AG04450 (cell line): ENCODE measurements at regions of chr4 and their contacts with region 1.

Region 1: DNA sequence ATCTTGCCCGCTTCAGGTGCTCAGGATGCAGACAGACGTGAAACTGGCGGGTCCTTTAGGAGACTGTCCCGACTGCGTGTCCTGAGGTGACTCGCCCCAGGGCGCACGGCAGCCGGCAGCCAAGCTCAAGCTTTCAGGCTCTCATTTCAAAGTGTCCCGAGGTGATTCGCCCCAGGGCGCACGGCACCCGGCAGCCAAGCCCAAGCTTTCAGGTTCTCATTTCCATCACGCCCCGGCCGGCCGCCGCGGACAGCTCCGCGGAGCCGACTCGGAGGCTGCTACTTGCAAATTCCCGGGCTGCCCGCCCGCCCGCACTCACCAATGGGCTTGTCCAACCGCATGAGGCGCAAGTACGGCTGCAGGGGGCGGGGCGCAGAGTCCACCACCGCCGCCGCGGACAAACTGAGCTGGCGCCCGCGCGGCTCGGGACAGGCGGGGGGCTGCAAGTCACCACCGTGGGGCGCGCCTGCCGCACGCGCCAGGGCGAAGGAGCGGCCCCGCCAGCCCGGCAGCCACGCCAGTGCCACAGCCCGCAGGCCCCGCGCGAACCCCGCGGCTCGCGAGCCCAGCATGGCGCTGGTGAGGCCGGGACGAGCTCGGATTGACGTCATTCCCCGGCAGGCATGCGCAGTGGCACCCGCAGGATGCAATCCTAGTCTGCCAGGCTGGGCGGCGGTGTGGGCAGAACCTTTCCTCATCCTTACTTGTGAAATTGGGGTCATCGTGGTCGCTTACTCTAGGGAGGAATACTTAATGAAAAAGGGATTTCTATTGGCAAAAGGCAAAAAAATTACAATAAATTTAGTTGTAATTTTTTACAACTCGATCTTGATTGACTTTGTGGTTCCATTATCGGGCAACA is at the start of gene COQ2:
- DNase-seq: peak; percentile 85
- H3K4me3 ChIP-seq: peak within 1 kb of the TSS; percentile 74
- H3K27ac ChIP-seq: peak within 1 kb of the TSS; percentile 69
- H3K27me3 ChIP-seq: no peaks in the 10 kb centered on the region
- CTCF ChIP-seq: no peak; the same call in 1 of the 2 replicates
- polyA plus RNA-seq, gene COQ2: 13.9 and 18.9 TPM in 2 replicates

Region 2: GRCh38 chr4:82462415-82462831 is 822.0 kb before region 1 on chr4:
- CTCF ChIA-PET with region 1: interaction called, 10 read pairs
- POLR2A ChIA-PET with region 1: no interaction called
- DNase-seq: peak; percentile 79
- H3K4me3 ChIP-seq: no peak overlapping the region
- H3K27ac ChIP-seq: no peak overlapping the region
- H3K27me3 ChIP-seq: no peaks in the 10 kb centered on the region
- CTCF ChIP-seq: peak; percentile 77

Region 3: DNA sequence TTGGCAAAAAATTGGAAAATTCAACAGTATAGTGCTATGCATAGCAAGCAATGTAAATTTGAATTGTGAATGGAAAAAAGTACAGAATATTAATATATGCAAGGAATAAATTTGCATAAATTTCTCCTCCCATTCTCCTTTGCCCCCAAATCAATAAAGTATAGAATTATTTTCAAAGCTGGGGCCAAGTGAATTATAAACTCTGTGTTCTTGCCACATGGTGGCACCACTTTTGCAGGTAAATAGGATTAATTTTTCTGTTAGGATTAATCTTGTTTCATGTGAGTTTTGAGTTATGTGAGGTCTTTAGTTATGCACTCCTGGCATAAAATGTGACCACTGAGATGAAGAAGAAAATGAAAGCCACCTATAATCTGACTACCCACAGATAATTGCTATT is 229.5 kb before region 1 on chr4:
- CTCF ChIA-PET with region 1: interaction called, 18 read pairs
- POLR2A ChIA-PET with region 1: no interaction called
- DNase-seq: no peak
- H3K4me3 ChIP-seq: no peak overlapping the region
- H3K27ac ChIP-seq: no peak overlapping the region
- H3K27me3 ChIP-seq: no peaks in the 10 kb centered on the region
- CTCF ChIP-seq: peak; percentile 41

Region 4: DNA sequence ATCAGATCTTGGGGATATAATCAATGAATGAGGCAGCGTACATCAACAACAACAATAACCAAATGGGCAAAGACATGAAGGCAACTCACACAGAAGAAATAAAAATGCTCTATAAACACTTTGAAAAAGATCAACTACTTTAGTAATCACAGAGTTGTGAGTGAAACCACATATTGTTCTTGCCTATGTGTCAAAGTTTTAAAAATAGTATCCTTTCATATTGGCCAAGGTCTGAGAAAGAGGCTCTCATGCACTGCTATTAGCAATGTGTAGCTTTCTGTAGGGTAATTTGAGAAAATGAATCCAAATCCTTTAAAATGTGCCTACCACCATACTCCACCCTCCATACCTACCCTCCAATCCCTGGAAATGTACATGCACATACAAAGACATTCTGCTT is 24.8 kb before region 1 on chr4:
- CTCF ChIA-PET with region 1: interaction called, 13 read pairs
- POLR2A ChIA-PET with region 1: interaction called, 3 read pairs
- DNase-seq: no peak
- H3K4me3 ChIP-seq: no peak overlapping the region
- H3K27ac ChIP-seq: no peak overlapping the region
- H3K27me3 ChIP-seq: no peaks in the 10 kb centered on the region
- CTCF ChIP-seq: no peak

Region 5: DNA sequence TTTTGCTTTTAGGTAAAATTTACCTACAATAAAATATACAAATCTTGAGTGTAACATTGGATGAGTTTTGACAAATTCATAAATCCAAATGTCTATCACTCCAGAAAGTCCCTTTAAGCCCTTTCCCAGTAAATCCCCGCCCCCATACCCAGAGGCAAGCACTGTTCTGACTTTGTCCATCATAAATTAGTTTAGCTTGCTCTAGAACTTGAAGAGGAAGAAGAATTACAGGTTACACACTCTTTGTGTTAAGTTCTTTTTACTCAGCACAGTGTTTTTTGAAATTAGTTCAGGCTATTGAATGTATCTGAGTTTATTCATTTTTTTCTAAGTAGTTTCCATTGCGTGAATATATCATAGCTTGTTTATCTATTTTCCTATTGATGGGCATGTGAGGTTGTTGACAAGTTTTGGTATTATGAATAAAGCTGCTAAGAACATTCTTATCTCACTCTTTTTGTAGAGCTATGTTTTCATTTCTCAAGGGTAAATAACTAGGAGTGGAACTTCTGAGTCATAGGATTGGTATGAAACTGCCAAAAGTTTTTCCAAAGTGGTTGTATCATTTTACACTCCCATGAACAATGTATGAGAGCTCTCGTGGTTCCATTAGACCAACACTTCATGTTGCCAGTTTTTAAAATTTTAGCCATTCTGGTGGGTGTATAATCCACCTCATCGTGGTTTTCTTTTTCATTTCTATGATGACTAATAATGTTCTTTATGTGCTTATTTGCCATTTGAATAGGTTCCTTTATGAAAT is 72.7 kb after region 1 on chr4:
- CTCF ChIA-PET with region 1: interaction called, 15 read pairs
- POLR2A ChIA-PET with region 1: no interaction called
- DNase-seq: peak; percentile 80
- H3K4me3 ChIP-seq: no peak overlapping the region
- H3K27ac ChIP-seq: peak overlapping the region; percentile 85
- H3K27me3 ChIP-seq: no peaks in the 10 kb centered on the region
- CTCF ChIP-seq: no peak

Region 6: GRCh38 chr4:83527671-83528070 is 243.2 kb after region 1 on chr4:
- CTCF ChIA-PET with region 1: no interaction called
- POLR2A ChIA-PET with region 1: no interaction called
- DNase-seq: no peak
- H3K4me3 ChIP-seq: no peak overlapping the region
- H3K27ac ChIP-seq: no peak overlapping the region
- H3K27me3 ChIP-seq: peaks cover 9% of the 10 kb centered on the region
- CTCF ChIP-seq: no peak